A673 (cell line): ENCODE measurements at regions of chr2 and their contacts with region 1.

Region 1: DNA sequence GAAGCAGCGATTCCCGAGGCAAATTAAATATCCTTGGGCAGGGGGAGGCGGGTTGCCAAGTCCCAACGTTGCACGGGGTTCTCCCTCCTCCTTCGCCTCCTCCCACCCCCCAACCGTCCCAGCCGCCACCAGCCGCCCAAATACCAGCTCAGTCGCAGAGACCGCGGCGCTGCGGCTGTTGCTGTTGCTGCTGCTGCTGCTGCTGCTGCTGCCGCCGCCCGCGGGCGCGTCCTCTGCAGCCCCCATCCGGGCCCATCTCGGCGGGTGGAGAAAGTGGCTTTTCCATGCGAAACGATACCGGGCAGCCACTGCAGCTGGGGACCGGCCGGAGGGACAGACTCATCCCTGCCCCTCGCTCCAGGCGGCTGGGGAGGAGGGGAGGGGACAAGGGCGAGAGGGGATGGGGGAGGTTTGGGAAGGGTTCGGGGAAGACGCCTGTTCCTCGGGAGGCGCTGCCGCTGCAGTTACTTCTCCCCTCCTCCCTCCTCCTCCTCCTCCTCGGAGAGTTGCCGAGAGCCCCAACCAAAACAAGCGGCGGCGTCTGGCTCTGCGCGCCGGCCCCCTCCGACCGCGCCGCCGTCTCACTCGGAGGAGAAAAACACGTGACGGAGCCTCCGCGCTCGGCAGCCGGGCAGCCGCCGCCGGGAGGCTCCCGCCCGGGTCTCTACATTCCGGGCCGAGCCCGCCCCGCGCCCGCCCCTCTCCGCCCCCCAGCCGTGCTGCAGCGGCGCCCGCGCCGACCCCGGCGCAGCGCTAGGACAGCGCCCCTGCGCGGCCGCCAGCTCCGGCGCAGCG is at the start of gene IRS1:
- DNase-seq: peak; percentile 90
- H3K4me3 ChIP-seq: peak within 1 kb of the TSS; percentile 91
- H3K27ac ChIP-seq: peak within 1 kb of the TSS; percentile 88
- H3K4me1 ChIP-seq: peaks cover 27% of the 10 kb centered on the region
- H3K27me3 ChIP-seq: no peaks in the 10 kb centered on the region
- CTCF ChIP-seq: no peak
- total RNA-seq, gene IRS1: 27.9 and 29.3 TPM in 2 replicates

Region 2: GRCh38 chr2:225668606-225669266 is 1130.6 kb before region 1 on chr2:
- CTCF ChIA-PET with region 1: interaction called, 27 read pairs
- POLR2A ChIA-PET with region 1: no interaction called
- intact Hi-C with region 1: loop called (anchors 1 kb)
- DNase-seq: peak; percentile 91
- H3K4me3 ChIP-seq: no peak overlapping the region
- H3K27ac ChIP-seq: peak overlapping the region; percentile 85
- H3K4me1 ChIP-seq: peaks cover 47% of the 10 kb centered on the region
- H3K27me3 ChIP-seq: no peaks in the 10 kb centered on the region
- CTCF ChIP-seq: peak; percentile 90

Region 3: GRCh38 chr2:225889446-225889850 is 909.9 kb before region 1 on chr2:
- CTCF ChIA-PET with region 1: interaction called, 7 read pairs
- POLR2A ChIA-PET with region 1: no interaction called
- intact Hi-C with region 1: loop called (anchors 2 kb)
- DNase-seq: peak; percentile 75
- H3K4me3 ChIP-seq: no peak overlapping the region
- H3K27ac ChIP-seq: no peak overlapping the region
- H3K4me1 ChIP-seq: peaks cover 7% of the 10 kb centered on the region
- H3K27me3 ChIP-seq: no peaks in the 10 kb centered on the region
- CTCF ChIP-seq: peak; percentile 82

Region 4: GRCh38 chr2:226118471-226119430 is 680.6 kb before region 1 on chr2:
- CTCF ChIA-PET with region 1: no interaction called
- POLR2A ChIA-PET with region 1: no interaction called
- intact Hi-C with region 1: loop called (anchors 2 kb)
- DNase-seq: peak; percentile 92
- H3K4me3 ChIP-seq: peak overlapping the region; percentile 9
- H3K27ac ChIP-seq: peak overlapping the region; percentile 55
- H3K4me1 ChIP-seq: peaks cover 84% of the 10 kb centered on the region
- H3K27me3 ChIP-seq: no peaks in the 10 kb centered on the region
- CTCF ChIP-seq: no peak

Region 5: GRCh38 chr2:226431288-226431948 is 368.0 kb before region 1 on chr2:
- CTCF ChIA-PET with region 1: no interaction called
- POLR2A ChIA-PET with region 1: no interaction called
- intact Hi-C with region 1: loop called (anchors 5 kb)
- DNase-seq: peak; percentile 97
- H3K4me3 ChIP-seq: no peak overlapping the region
- H3K27ac ChIP-seq: peak overlapping the region; percentile 65
- H3K4me1 ChIP-seq: peaks cover 37% of the 10 kb centered on the region
- H3K27me3 ChIP-seq: no peaks in the 10 kb centered on the region
- CTCF ChIP-seq: no peak

Region 6: GRCh38 chr2:226862623-226863022 is 63.2 kb after region 1 on chr2:
- CTCF ChIA-PET with region 1: no interaction called
- POLR2A ChIA-PET with region 1: no interaction called
- intact Hi-C with region 1: no loop called
- DNase-seq: no peak
- H3K4me3 ChIP-seq: no peak overlapping the region
- H3K27ac ChIP-seq: no peak overlapping the region
- H3K4me1 ChIP-seq: no peaks in the 10 kb centered on the region
- H3K27me3 ChIP-seq: no peaks in the 10 kb centered on the region
- CTCF ChIP-seq: no peak

Region 7: GRCh38 chr2:226984750-226985582 is 185.6 kb after region 1 on chr2:
- CTCF ChIA-PET with region 1: interaction called, 6 read pairs
- POLR2A ChIA-PET with region 1: no interaction called
- intact Hi-C with region 1: loop called (anchors 2 kb)
- DNase-seq: peak; percentile 88
- H3K4me3 ChIP-seq: no peak overlapping the region
- H3K27ac ChIP-seq: peak overlapping the region; percentile 52
- H3K4me1 ChIP-seq: peaks cover 14% of the 10 kb centered on the region
- H3K27me3 ChIP-seq: no peaks in the 10 kb centered on the region
- CTCF ChIP-seq: peak; percentile 77